ENCODE measurements at regions of chr7 and their contacts with region 1.

Region 1: GRCh38 chr7:151017953-151018420 is 6.3 kb downstream of the ATG9B start:
- DNase-seq: peak; percentile 98
- H3K4me3 ChIP-seq: peak overlapping the region; percentile 28 to 34
- H3K27ac ChIP-seq: peak overlapping the region in 1 of 2 experiments; percentile 18; a peak in 2 of 4 replicates
- H3K4me1 ChIP-seq: peaks cover 0 to 27% of the 10 kb centered on the region in 2 experiments; a peak in 1 of 4 replicates
- H3K27me3 ChIP-seq: peaks cover 15% of the 10 kb centered on the region; the same call in 1 of the 2 replicates
- CTCF ChIP-seq: peak; percentile 99
- EP300 ChIP-seq: no peak
- RAD21 ChIP-seq: peak; percentile 73

Region 2: GRCh38 chr7:150876817-150877526 is 141.0 kb before region 1 on chr7:
- CTCF ChIA-PET with region 1: interaction called, 16 read pairs
- POLR2A ChIA-PET with region 1: no interaction called
- DNase-seq: peak; percentile 91
- H3K4me3 ChIP-seq: no peak overlapping the region
- H3K27ac ChIP-seq: peak overlapping the region in 1 of 2 experiments; percentile 60; a peak in 2 of 4 replicates
- H3K4me1 ChIP-seq: peaks cover 5% of the 10 kb centered on the region in 2 experiments; a peak in 2 of 4 replicates
- H3K27me3 ChIP-seq: no peaks in the 10 kb centered on the region
- CTCF ChIP-seq: peak; percentile 58
- EP300 ChIP-seq: no peak
- RAD21 ChIP-seq: peak; percentile 69

Region 3: DNA sequence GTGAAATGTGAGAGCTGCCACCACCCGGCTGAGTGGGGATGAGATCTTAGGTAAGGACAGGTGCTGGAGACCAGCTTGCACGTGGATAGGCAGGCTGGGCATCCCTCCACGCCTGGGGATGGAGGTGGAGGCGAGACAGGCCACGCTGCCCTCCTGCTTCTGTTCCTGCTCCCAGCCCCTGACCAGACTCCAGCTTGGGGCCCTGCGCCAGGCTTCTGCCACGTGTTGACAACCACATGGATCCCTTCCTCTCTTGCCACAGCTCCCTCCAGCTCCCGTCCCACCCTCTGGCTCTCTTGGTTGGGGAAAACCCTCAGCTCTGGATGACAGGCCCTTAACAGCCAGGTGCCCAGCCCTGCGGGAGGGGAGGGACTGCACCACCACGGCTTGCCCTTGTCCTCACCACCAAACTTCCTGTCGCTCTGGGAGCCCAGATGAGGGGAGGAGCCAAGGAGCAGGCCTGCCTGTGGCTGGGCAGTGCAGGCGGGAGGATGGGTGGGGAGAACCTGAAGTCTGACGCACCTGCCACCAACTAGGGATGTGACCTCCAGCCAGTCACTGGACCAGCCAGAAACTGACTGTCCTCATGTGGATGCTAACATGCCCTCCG is 75.9 kb before region 1 on chr7:
- CTCF ChIA-PET with region 1: interaction called, 13 read pairs
- POLR2A ChIA-PET with region 1: interaction called, 3 read pairs
- DNase-seq: peak; percentile 71
- H3K4me3 ChIP-seq: no peak overlapping the region
- H3K27ac ChIP-seq: peak overlapping the region in 1 of 2 experiments; percentile 82; a peak in 2 of 4 replicates
- H3K4me1 ChIP-seq: peaks cover 0 to 84% of the 10 kb centered on the region in 2 experiments; a peak in 2 of 4 replicates
- H3K27me3 ChIP-seq: 0 out of 2 replicates have a peak, but pooled peaks cover 11% of the 10 kb centered on the region
- CTCF ChIP-seq: no peak
- EP300 ChIP-seq: 0 out of 4 replicates have a peak, but pooled peaks of 1 of the 2 experiments have one; percentile 17
- RAD21 ChIP-seq: no peak

Region 4: GRCh38 chr7:150974468-150975391 is 43.3 kb before region 1 on chr7:
- CTCF ChIA-PET with region 1: interaction called, 17 read pairs
- POLR2A ChIA-PET with region 1: interaction called, 3 read pairs
- DNase-seq: peak; percentile 82
- H3K4me3 ChIP-seq: peak overlapping the region in 1 of 2 experiments; percentile 37; a peak in 2 of 4 replicates
- H3K27ac ChIP-seq: peak overlapping the region in 1 of 2 experiments; percentile 100; a peak in 3 of 4 replicates
- H3K4me1 ChIP-seq: peaks cover 0 to 90% of the 10 kb centered on the region in 2 experiments; a peak in 2 of 4 replicates
- H3K27me3 ChIP-seq: peaks cover 71% of the 10 kb centered on the region
- CTCF ChIP-seq: peak; percentile 36
- EP300 ChIP-seq: no peak
- RAD21 ChIP-seq: peak; percentile 38; the same call in 1 of the 2 replicates

Region 5: DNA sequence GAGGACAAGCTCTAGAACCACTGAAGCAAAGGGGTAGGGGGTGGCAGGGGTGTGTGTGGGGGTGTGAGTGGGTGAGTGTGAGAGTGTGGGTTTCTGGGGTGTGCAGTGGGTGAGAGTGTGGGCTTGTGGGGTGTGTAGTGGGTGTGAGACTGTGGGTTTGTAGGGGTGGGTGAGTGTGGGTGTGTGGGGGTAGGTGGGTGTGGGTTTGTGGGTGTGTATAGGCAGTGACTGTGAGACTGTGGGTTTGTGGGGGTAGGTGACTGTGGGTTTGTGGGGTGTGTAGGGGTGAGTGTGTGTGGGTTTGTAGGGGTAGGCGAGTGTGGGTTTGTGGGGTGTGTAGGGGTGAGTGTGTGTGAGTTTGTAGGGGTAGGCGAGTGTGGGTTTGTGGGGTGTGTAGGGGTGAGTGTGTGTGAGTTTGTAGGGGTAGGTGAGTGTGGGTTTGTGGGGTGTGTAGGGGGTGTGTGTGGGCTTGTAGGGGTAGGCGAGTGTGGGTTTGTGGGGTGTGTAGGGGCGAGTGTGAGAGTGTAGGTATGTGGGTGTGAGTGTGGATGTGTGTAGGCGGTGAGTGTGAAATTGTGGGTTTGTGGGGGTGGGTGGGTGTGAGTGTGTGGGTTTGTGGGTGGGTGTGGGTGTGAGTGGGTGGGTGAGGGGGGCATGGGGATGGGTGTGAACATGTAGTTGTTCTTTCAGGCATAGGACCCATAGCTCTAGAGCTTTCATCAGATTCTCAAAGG is 18.3 kb before region 1 on chr7:
- CTCF ChIA-PET with region 1: interaction called, 151 read pairs
- POLR2A ChIA-PET with region 1: interaction called, 4 read pairs
- DNase-seq: peak; percentile 19
- H3K4me3 ChIP-seq: no peak overlapping the region
- H3K27ac ChIP-seq: no peak overlapping the region
- H3K4me1 ChIP-seq: peaks cover 0 to 5% of the 10 kb centered on the region in 2 experiments; a peak in 1 of 4 replicates
- H3K27me3 ChIP-seq: no peaks in the 10 kb centered on the region
- CTCF ChIP-seq: no peak
- EP300 ChIP-seq: no peak
- RAD21 ChIP-seq: no peak

Region 6: GRCh38 chr7:151046603-151047504 is 28.9 kb after region 1 on chr7:
- CTCF ChIA-PET with region 1: interaction called, 21 read pairs
- POLR2A ChIA-PET with region 1: interaction called, 3 read pairs
- DNase-seq: peak; percentile 88
- H3K4me3 ChIP-seq: no peak overlapping the region
- H3K27ac ChIP-seq: peak overlapping the region; percentile 61 to 78
- H3K4me1 ChIP-seq: peaks cover 13 to 39% of the 10 kb centered on the region in 2 experiments
- H3K27me3 ChIP-seq: no peaks in the 10 kb centered on the region
- CTCF ChIP-seq: no peak
- EP300 ChIP-seq: no peak; a peak in 1 of 4 replicates
- RAD21 ChIP-seq: no peak

Region 7: GRCh38 chr7:151110941-151111645 is 93.1 kb after region 1 on chr7:
- CTCF ChIA-PET with region 1: interaction called, 101 read pairs
- POLR2A ChIA-PET with region 1: interaction called, 3 read pairs
- DNase-seq: peak; percentile 96
- H3K4me3 ChIP-seq: no peak overlapping the region; a peak in 1 of 4 replicates
- H3K27ac ChIP-seq: no peak overlapping the region
- H3K4me1 ChIP-seq: peaks cover 24 to 36% of the 10 kb centered on the region in 2 experiments
- H3K27me3 ChIP-seq: no peaks in the 10 kb centered on the region
- CTCF ChIP-seq: peak; percentile 94
- EP300 ChIP-seq: no peak
- RAD21 ChIP-seq: peak; percentile 90